Posterior vena cava (tissue), 2 donors: ENCODE measurements at regions of chrX and their contacts with region 1.

Region 1: GRCh38 chrX:136691028-136691809 is 43.3 kb downstream of the CD40LG start:
- DNase-seq: no peak

Region 2: GRCh38 chrX:135373357-135373756 is 1317.9 kb before region 1 on chrX:
- intact Hi-C with region 1: no loop called
- DNase-seq: no peak

Region 3: DNA sequence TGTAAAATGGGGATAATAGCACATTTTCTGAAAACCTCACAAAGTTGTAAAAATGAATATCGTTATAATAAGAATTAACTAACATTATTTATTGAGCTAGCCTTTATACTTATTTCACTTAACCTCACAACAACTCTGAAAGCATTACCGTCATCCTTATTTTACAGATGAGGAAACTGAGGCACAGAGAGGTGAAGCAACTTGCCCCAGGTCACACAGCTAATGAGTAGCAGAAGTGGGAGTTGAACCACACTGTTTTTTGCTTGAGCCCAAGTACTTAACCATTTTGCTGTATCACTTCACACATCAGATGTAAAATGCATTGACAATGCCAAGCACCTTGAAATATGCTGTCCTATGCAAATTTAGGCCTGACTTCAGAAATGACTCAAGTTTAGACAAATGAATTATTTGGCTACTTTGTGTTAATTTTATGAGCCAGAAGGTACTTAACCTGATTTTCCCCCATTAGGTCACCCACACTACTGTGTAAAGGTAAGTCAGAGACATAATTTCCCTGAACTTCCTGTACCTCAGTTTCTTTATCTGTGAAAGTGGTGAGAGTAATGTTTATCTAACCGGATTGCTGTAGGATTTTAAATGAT is 20.1 kb before region 1 on chrX:
- intact Hi-C with region 1: loop called in 1 of 2 experiments (anchors 1 kb)
- DNase-seq: no peak

Region 4: GRCh38 chrX:136767104-136767941 is 76.1 kb after region 1 on chrX:
- intact Hi-C with region 1: no loop called
- DNase-seq: peak; percentile 89